ENCODE measurements at regions of chr1 and their contacts with region 1.

Region 1: DNA sequence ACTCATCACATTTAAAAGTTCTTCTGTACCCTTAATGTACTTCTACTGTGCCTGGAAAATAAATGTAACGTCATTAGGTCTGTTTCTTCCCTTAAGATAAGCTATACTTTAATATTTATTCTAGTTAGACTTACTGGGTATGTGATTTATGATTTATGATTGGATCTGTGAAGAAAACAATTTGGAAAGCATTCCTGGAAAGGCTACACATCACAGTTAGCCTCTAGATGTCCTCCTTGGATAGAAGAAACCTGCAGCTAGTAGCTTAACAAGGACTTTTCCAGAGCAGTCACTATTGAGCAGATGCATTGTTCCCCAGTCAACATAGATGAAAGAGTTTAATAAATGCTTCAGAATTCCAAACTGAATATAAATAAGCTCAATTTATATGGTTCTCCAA is 22.2 kb upstream of the ABL2 start:
- DNase-seq: peak; percentile 25
- H3K4me3 ChIP-seq: no peak overlapping the region
- H3K27ac ChIP-seq: no peak overlapping the region
- H3K4me1 ChIP-seq: no peaks in the 10 kb centered on the region
- H3K27me3 ChIP-seq: no peaks in the 10 kb centered on the region
- CTCF ChIP-seq: peak; percentile 32 to 64

Region 2: DNA sequence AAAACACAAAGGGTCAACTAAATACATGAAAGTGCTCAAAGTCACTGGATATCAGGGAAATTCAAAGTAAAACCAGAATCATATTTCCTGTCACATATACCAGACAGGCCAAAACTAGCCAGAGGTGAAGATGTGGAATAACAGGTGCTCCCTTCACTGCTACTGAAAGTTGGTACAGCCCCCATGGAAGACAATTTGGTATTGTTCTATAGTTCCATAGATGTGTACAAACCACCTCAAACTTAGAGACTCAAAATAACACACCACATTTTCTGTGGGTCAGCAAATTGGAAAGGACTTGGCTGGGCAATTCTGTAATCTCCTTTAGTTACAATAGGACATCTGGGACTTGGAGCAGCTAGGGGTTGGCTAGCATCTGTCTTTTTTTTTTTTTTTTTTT is 17.4 kb after region 1 on chr1:
- CTCF ChIA-PET with region 1: no interaction called
- dilution Hi-C with region 1: no loop called
- in situ Hi-C with region 1: no loop called
- intact Hi-C with region 1: no loop called
- DNase-seq: no peak
- H3K4me3 ChIP-seq: no peak overlapping the region
- H3K27ac ChIP-seq: no peak overlapping the region
- H3K4me1 ChIP-seq: no peaks in the 10 kb centered on the region
- H3K27me3 ChIP-seq: no peaks in the 10 kb centered on the region
- CTCF ChIP-seq: no peak

Region 3: GRCh38 chr1:179447489-179447888 is 195.8 kb after region 1 on chr1:
- CTCF ChIA-PET with region 1: interaction called, 3 read pairs
- dilution Hi-C with region 1: no loop called
- in situ Hi-C with region 1: no loop called
- intact Hi-C with region 1: loop called (anchors 5 kb)
- DNase-seq: peak; percentile 4
- H3K4me3 ChIP-seq: no peak overlapping the region
- H3K27ac ChIP-seq: no peak overlapping the region
- H3K4me1 ChIP-seq: no peaks in the 10 kb centered on the region
- H3K27me3 ChIP-seq: peaks cover 2% of the 10 kb centered on the region
- CTCF ChIP-seq: peak; percentile 26 to 28

Region 4: DNA sequence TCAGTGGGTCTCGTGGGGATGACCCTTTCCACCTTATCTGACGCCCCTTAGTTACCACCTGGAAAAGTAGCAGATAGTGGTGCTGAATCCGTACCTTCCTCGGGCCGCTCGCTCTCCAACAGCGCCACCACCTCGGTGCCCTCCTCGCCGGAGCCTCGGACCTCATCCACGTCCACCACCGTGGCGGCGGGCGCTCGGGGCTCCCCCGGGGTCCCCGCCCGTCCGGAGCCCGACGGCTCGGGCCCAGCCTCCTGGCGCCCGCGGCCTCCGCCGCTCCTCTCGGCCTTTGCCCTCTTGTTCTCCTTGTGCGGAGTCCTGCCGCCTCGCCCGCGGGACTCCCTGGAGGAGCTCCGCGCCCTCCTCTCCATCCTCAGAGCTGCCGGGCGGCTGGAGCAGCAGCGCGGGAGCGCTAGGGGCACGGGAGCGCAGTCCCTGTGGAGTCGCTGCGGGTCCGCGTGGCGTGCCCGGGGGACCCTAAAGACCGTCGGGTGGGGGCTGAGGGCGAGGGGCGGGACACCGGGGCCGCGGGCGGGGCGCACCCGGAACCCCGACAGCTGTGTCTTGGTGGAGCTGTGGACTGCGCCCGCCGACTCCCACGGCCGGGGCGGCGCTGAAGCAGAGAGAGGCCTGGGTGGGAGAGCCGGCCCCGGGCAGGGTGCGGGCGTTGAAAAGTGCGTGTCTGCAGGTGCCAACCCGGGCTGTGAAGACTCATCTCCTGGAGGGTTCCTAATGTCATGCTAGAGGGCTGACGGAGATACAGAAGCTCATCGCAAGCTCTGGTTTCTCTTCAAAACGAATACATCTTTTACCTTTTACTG is 324.0 kb after region 1 on chr1 and contains the start of gene NPHS2:
- CTCF ChIA-PET with region 1: no interaction called
- dilution Hi-C with region 1: no loop called
- in situ Hi-C with region 1: no loop called
- intact Hi-C with region 1: no loop called
- DNase-seq: no peak
- H3K4me3 ChIP-seq: no peak within 1 kb of the TSS
- H3K27ac ChIP-seq: no peak within 1 kb of the TSS
- H3K4me1 ChIP-seq: no peaks in the 10 kb centered on the region
- H3K27me3 ChIP-seq: peaks cover 25% of the 10 kb centered on the region
- CTCF ChIP-seq: no peak
- total RNA-seq, gene NPHS2: not detected

Region 5: GRCh38 chr1:179599623-179600249 is 348.1 kb after region 1 on chr1:
- CTCF ChIA-PET with region 1: interaction called, 5 read pairs
- dilution Hi-C with region 1: no loop called
- in situ Hi-C with region 1: loop called (anchors 25 kb)
- intact Hi-C with region 1: loop called (anchors 1 kb)
- DNase-seq: peak; percentile 32
- H3K4me3 ChIP-seq: no peak overlapping the region
- H3K27ac ChIP-seq: no peak overlapping the region
- H3K4me1 ChIP-seq: no peaks in the 10 kb centered on the region
- H3K27me3 ChIP-seq: peaks cover 3% of the 10 kb centered on the region
- CTCF ChIP-seq: peak; percentile 50 to 53

Measured in mammary epithelial cell (primary cell).